ENCODE measurements at regions of chr11 and their contacts with region 1.

Region 1: GRCh38 chr11:6377902-6378639 is 12.2 kb upstream of the SMPD1 start:
- DNase-seq: peak in 1 of 35 experiments; percentile 43
- ATAC-seq: peak; percentile 85 to 93 (median 88)
- H3K4me3 ChIP-seq: peak overlapping the region in 1 of 2 donors; percentile 2
- H3K4me3 Mint-ChIP-seq: peak overlapping the region in 2 of 3 donors; percentile 49 to 65
- H3K27ac ChIP-seq: peak overlapping the region; percentile 18
- H3K27ac Mint-ChIP-seq: peak overlapping the region; percentile 89 to 90
- H3K4me1 ChIP-seq: peaks cover 12 to 15% of the 10 kb centered on the region in 2 experiments
- H3K4me1 Mint-ChIP-seq: peaks cover 26 to 34% (median 29%) of the 10 kb centered on the region in 3 donors
- H3K27me3 ChIP-seq: peaks cover 0 to 6% of the 10 kb centered on the region in 2 experiments
- H3K27me3 Mint-ChIP-seq: no peaks in the 10 kb centered on the region

Region 2: DNA sequence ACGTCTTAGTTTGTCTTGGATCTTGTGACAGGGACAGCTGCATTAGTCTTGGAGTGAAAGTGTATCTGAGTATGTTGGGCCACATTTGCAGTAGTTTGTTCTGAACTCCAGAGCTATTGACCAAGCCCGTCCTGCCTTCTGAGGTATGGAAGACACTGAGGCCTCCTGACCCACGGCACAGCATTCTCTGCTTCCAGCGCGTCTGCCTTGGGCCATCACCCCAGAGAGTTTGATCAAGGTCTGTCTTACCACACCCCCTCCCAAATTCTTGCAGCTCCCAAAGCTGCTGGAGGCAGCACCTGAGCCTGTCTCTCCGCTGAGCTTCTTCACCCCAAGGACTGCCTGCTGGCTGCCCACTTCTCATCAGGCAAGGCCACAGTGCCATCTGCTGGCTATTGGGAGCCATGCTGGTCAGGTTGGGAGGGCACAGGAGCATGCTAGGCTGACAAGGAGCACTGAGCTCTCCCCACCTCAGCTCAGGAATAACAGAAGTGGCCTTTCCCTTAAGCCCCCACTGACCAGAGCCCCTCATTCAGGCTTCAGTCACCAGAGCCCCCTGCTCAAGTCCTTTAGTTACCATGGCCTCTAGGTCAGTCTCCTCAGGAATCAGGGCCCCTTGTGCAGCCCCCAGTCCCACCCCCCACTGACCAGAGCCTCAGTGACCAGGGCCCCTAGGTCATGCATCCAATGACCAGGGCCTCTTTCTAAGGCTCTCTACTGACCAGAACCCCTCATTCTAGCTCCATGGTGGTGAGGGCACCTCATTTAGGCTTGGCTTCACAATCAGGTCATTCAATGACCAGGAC is 15.0 kb before region 1 on chr11:
- CTCF ChIA-PET with region 1: interaction called, 19 to 22 read pairs
- POLR2A ChIA-PET with region 1: interaction called in 1 of 2 experiments, 3 read pairs
- DNase-seq: peak; percentile 20 to 74 (median 53)
- ATAC-seq: peak; percentile 81 to 92 (median 87)
- H3K4me3 ChIP-seq: no peak overlapping the region
- H3K4me3 Mint-ChIP-seq: no peak overlapping the region
- H3K27ac ChIP-seq: no peak overlapping the region
- H3K27ac Mint-ChIP-seq: no peak overlapping the region
- H3K4me1 ChIP-seq: peaks cover 0 to 3% of the 10 kb centered on the region in 2 experiments
- H3K4me1 Mint-ChIP-seq: no peaks in the 10 kb centered on the region
- H3K27me3 ChIP-seq: peaks cover 0 to 4% of the 10 kb centered on the region in 2 experiments
- H3K27me3 Mint-ChIP-seq: no peaks in the 10 kb centered on the region

Region 3: DNA sequence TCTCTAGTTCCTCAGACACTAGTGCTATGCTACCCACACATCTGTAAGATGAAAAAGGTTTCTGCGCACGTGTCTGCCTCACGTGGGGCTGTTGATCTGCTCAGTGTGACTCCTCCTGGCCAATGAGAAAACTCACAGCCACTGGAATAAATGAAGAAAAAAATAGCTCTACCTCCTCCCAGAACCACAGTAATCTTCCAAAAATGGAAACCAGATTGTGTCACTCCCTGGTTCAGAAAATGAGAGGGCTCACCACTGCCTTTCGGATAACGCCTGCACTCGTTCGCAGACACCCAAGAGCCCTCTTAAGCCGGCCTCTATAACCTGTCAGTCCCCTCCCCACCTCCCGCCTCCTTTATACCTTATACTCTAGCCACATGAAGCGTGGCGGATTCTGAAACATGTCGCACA is 35.7 kb after region 1 on chr11:
- CTCF ChIA-PET with region 1: interaction called, 12 to 44 read pairs
- POLR2A ChIA-PET with region 1: interaction called, 3 to 9 read pairs
- DNase-seq: peak; percentile 38 to 84 (median 72)
- ATAC-seq: peak; percentile 87 to 92 (median 88)
- H3K4me3 ChIP-seq: peak overlapping the region; percentile 8 to 18
- H3K4me3 Mint-ChIP-seq: no peak overlapping the region
- H3K27ac ChIP-seq: peak overlapping the region; percentile 69
- H3K27ac Mint-ChIP-seq: no peak overlapping the region
- H3K4me1 ChIP-seq: peaks cover 41 to 84% of the 10 kb centered on the region in 2 experiments
- H3K4me1 Mint-ChIP-seq: peaks cover 13 to 39% (median 37%) of the 10 kb centered on the region in 3 donors
- H3K27me3 ChIP-seq: no peaks in the 10 kb centered on the region
- H3K27me3 Mint-ChIP-seq: no peaks in the 10 kb centered on the region

Region 4: GRCh38 chr11:6443269-6444003 is 65.4 kb after region 1 on chr11:
- CTCF ChIA-PET with region 1: interaction called, 121 to 261 read pairs
- POLR2A ChIA-PET with region 1: interaction called in 1 of 2 experiments, 3 read pairs
- DNase-seq: peak in 33 of 35 experiments; percentile 20 to 79 (median 48)
- ATAC-seq: peak; percentile 83 to 92 (median 84)
- H3K4me3 ChIP-seq: no peak overlapping the region
- H3K4me3 Mint-ChIP-seq: no peak overlapping the region
- H3K27ac ChIP-seq: no peak overlapping the region
- H3K27ac Mint-ChIP-seq: no peak overlapping the region
- H3K4me1 ChIP-seq: peaks cover 13 to 19% of the 10 kb centered on the region in 2 experiments
- H3K4me1 Mint-ChIP-seq: peaks cover 0 to 3% (median 2%) of the 10 kb centered on the region in 3 donors
- H3K27me3 ChIP-seq: no peaks in the 10 kb centered on the region
- H3K27me3 Mint-ChIP-seq: no peaks in the 10 kb centered on the region

Region 5: GRCh38 chr11:6481012-6481923 is 103.2 kb after region 1 on chr11 and contains the starts of genes ARFIP2 and TIMM10B:
- CTCF ChIA-PET with region 1: interaction called, 4 to 16 read pairs
- POLR2A ChIA-PET with region 1: interaction called, 3 read pairs
- DNase-seq: peak; percentile 82 to 99 (median 97)
- ATAC-seq: peak; percentile 95 to 98 (median 98)
- H3K4me3 ChIP-seq: peak within 1 kb of the TSS; percentile 90 to 94
- H3K4me3 Mint-ChIP-seq: peak within 1 kb of the TSS; percentile 92 to 96 (median 96)
- H3K27ac ChIP-seq: peak within 1 kb of the TSS; percentile 97
- H3K27ac Mint-ChIP-seq: peak within 1 kb of the TSS; percentile 97 to 98
- H3K4me1 ChIP-seq: peaks cover 18 to 26% of the 10 kb centered on the region in 2 experiments
- H3K4me1 Mint-ChIP-seq: peaks cover 43 to 46% (median 45%) of the 10 kb centered on the region in 3 donors
- H3K27me3 ChIP-seq: no peaks in the 10 kb centered on the region
- H3K27me3 Mint-ChIP-seq: no peaks in the 10 kb centered on the region
- total RNA-seq, gene ARFIP2: 47.3 to 61.9 (median 50.0) TPM
- total RNA-seq, gene TIMM10B: 49.3 to 64.0 (median 57.6) TPM

Region 6: GRCh38 chr11:6682936-6683861 is 305.1 kb after region 1 on chr11 and contains the start of gene MRPL17:
- CTCF ChIA-PET with region 1: interaction called, 4 to 13 read pairs
- POLR2A ChIA-PET with region 1: no interaction called
- DNase-seq: peak; percentile 96 to 100 (median 98)
- ATAC-seq: peak; percentile 95 to 99 (median 96)
- H3K4me3 ChIP-seq: peak within 1 kb of the TSS; percentile 88 to 92
- H3K4me3 Mint-ChIP-seq: peak within 1 kb of the TSS; percentile 96 to 100 (median 98)
- H3K27ac ChIP-seq: peak within 1 kb of the TSS; percentile 92
- H3K27ac Mint-ChIP-seq: peak within 1 kb of the TSS; percentile 99 to 100
- H3K4me1 ChIP-seq: peaks cover 16 to 18% of the 10 kb centered on the region in 2 experiments
- H3K4me1 Mint-ChIP-seq: peaks cover 29 to 45% (median 32%) of the 10 kb centered on the region in 3 donors
- H3K27me3 ChIP-seq: no peaks in the 10 kb centered on the region
- H3K27me3 Mint-ChIP-seq: no peaks in the 10 kb centered on the region
- total RNA-seq, gene MRPL17: 12.1 to 33.1 (median 30.2) TPM

Region 7: GRCh38 chr11:6757373-6757967 is 379.4 kb after region 1 on chr11:
- CTCF ChIA-PET with region 1: interaction called, 4 to 12 read pairs
- POLR2A ChIA-PET with region 1: no interaction called
- DNase-seq: peak; percentile 19 to 81 (median 51)
- ATAC-seq: peak; percentile 73 to 84 (median 80)
- H3K4me3 ChIP-seq: no peak overlapping the region
- H3K4me3 Mint-ChIP-seq: no peak overlapping the region
- H3K27ac ChIP-seq: no peak overlapping the region
- H3K27ac Mint-ChIP-seq: no peak overlapping the region
- H3K4me1 ChIP-seq: no peaks in the 10 kb centered on the region
- H3K4me1 Mint-ChIP-seq: peaks cover 13 to 17% (median 14%) of the 10 kb centered on the region in 3 donors
- H3K27me3 ChIP-seq: no peaks in the 10 kb centered on the region
- H3K27me3 Mint-ChIP-seq: peaks cover 3 to 7% of the 10 kb centered on the region in 2 donors

Measured in T-cell (primary cell).